Naive thymus-derived CD4-positive, alpha-beta T cell (primary cell): ENCODE measurements at regions of chr1 and their contacts with region 1.

Region 1: GRCh38 chr1:32013386-32014198 is at the start of gene KHDRBS1:
- DNase-seq: peak; percentile 94 to 99 (median 98)
- ATAC-seq: peak; percentile 93
- H3K4me3 ChIP-seq: peak within 1 kb of the TSS; percentile 98
- H3K4me3 Mint-ChIP-seq: peak within 1 kb of the TSS; percentile 89 to 98 (median 96)
- H3K27ac ChIP-seq: peak within 1 kb of the TSS; percentile 96
- H3K27ac Mint-ChIP-seq: peak within 1 kb of the TSS; percentile 90 to 99 (median 97)
- H3K4me1 ChIP-seq: peaks cover 10 to 14% of the 10 kb centered on the region in 2 donors
- H3K4me1 Mint-ChIP-seq: peaks cover 17 to 45% (median 31%) of the 10 kb centered on the region in 7 donors
- H3K27me3 ChIP-seq: no peaks in the 10 kb centered on the region
- H3K27me3 Mint-ChIP-seq: peaks cover 0 to 2% (median 0%) of the 10 kb centered on the region in 5 donors
- total RNA-seq, gene KHDRBS1: 89.2 to 162 (median 125) TPM

Region 2: DNA sequence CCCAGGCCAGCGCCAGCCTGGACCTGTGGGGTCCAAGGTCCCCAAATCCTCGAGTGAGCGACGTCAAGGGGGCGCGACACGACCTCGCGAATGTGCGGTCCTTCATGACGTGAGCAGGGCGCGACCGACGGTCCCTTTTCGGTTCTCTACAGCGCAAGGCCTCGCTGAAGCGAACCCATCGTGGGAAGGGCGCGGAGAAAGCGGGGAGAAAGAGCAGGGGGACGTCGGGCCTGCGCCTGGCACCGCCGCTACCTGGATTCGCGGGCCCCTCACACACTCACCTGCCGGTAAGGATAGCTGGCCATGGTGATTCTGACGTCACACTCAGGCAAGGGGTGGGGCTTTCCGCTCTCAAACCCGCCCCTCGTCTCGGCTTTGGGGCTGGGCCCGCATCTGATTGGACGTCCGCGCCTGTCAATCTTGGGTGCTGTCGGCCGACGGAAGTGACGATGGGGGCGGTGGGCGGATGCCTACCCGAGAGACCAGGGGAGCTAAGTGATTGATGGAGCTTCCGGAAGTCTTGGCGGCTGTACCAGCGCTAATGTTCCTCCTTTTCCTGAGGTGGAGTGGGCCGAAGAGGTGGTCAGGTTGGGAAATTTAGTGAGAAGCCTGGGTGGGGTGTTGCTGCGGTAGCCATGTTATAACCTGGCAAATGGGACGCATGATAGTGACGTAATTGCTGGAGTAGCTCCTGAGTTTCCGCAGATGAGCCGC is 368.9 kb before region 1 on chr1 and contains the start of gene PEF1:
- CTCF ChIA-PET with region 1: no interaction called
- POLR2A ChIA-PET with region 1: no interaction called
- intact Hi-C with region 1: loop called (anchors 1 to 2 kb)
- DNase-seq: peak; percentile 97 to 100 (median 99)
- ATAC-seq: peak; percentile 94
- H3K4me3 ChIP-seq: peak within 1 kb of the TSS; percentile 91
- H3K4me3 Mint-ChIP-seq: peak within 1 kb of the TSS; percentile 92 to 100 (median 98)
- H3K27ac ChIP-seq: peak within 1 kb of the TSS; percentile 98
- H3K27ac Mint-ChIP-seq: peak within 1 kb of the TSS; percentile 98 to 100 (median 99)
- H3K4me1 ChIP-seq: peaks cover 27 to 30% of the 10 kb centered on the region in 2 donors
- H3K4me1 Mint-ChIP-seq: peaks cover 18 to 47% (median 40%) of the 10 kb centered on the region in 7 donors
- H3K27me3 ChIP-seq: no peaks in the 10 kb centered on the region
- H3K27me3 Mint-ChIP-seq: no peaks in the 10 kb centered on the region
- total RNA-seq, gene PEF1: 37.7 to 49.8 (median 40.8) TPM

Region 3: GRCh38 chr1:31891280-31891679 is 122.3 kb before region 1 on chr1:
- CTCF ChIA-PET with region 1: no interaction called
- POLR2A ChIA-PET with region 1: no interaction called
- intact Hi-C with region 1: loop called in 1 of 2 experiments (anchors 1 kb)
- DNase-seq: no peak
- ATAC-seq: no peak
- H3K4me3 ChIP-seq: no peak overlapping the region
- H3K4me3 Mint-ChIP-seq: peak overlapping the region in 2 of 10 donors; percentile 0 to 1
- H3K27ac ChIP-seq: no peak overlapping the region
- H3K27ac Mint-ChIP-seq: peak overlapping the region in 4 of 9 donors; percentile 1 to 98 (median 37)
- H3K4me1 ChIP-seq: peaks cover 13 to 21% of the 10 kb centered on the region in 2 donors
- H3K4me1 Mint-ChIP-seq: peaks cover 14 to 30% (median 21%) of the 10 kb centered on the region in 7 donors
- H3K27me3 ChIP-seq: no peaks in the 10 kb centered on the region
- H3K27me3 Mint-ChIP-seq: no peaks in the 10 kb centered on the region

Region 4: DNA sequence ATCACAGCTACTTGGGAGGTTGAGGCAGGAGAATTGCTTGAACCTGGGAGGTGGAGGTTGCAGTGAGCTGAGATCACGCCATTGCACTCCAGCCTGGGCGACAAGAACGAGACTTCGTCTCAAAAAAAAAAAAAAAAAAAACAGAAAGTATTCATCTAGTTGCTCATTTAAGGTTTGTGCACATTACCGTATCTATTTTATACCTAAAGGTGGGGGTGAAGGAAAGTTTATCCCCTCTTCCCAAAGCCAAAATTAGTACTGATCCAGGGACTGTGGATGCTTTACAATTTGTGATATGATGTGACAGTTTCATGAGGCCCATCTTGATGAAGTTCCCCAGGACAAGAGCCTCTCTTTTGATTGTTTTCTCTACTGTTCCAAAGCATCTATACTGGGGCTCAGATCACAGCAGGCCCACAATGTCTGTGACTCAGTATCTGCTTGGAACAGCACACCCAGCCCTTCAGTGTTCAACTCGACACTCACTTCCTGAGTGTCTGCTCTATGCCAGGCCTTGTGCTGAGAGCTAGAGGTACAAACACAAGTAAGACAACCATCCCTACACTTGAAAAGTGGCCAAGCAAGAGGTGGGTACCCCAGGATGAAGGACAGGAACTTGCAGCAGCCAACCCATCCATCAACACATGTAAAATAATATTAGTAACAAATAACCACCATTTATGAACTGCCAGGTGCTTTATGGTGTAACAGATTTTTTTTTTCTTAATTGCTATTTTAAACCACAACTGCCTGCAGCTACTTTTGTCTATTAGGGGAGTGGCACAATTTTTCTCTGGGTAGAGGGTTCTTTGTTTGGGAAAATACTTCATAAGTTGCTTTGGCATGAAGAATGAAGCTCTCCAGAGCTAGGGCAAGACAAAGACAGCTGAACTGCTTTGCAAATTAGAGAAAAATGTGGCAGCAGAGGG is 28.9 kb before region 1 on chr1:
- CTCF ChIA-PET with region 1: no interaction called
- POLR2A ChIA-PET with region 1: interaction called, 6 read pairs
- intact Hi-C with region 1: loop called (anchors 1 to 2 kb)
- DNase-seq: peak in 5 of 9 donors; percentile 14 to 41 (median 22)
- ATAC-seq: peak; percentile 58
- H3K4me3 ChIP-seq: no peak overlapping the region
- H3K4me3 Mint-ChIP-seq: peak overlapping the region; percentile 7 to 80 (median 66)
- H3K27ac ChIP-seq: peak overlapping the region; percentile 66
- H3K27ac Mint-ChIP-seq: peak overlapping the region; percentile 57 to 95 (median 91)
- H3K4me1 ChIP-seq: peaks cover 46 to 59% of the 10 kb centered on the region in 2 donors
- H3K4me1 Mint-ChIP-seq: peaks cover 34 to 73% (median 60%) of the 10 kb centered on the region in 7 donors
- H3K27me3 ChIP-seq: no peaks in the 10 kb centered on the region
- H3K27me3 Mint-ChIP-seq: no peaks in the 10 kb centered on the region

Region 5: DNA sequence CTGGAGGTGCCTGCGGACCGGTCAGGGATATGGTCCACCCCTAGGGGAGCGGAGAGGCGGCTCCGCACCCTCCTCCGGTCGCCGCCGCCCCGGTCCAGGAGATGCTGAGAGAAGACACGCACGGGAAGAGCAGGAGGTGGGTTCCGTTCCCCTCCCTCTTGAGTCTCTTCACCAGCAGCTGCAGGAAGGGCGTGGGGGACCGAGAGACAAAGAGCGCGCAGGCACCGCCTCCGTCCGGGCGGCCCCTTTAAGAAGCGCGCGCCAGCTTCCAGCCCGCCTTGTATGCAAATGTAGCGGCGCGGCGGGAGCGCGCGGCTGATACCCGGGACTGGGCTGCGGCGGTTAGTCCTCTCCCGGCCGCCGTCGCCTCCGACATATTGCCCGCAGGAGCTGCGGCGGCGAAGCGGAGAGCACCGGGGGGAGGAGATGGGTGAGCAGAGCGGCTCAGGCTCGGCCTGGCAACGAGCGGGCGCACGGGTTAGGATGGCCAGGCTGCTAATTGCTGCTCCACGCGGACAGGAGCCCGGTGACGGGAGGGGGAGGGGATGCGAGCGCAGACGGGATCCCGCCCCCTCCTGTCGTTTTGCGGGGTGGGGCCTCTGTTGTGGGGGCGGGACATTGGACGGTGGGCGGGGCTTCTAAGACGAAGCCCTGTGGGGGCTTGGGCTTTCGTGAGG is 59.2 kb after region 1 on chr1 and contains the start of gene TMEM39B:
- CTCF ChIA-PET with region 1: no interaction called
- POLR2A ChIA-PET with region 1: interaction called, 15 read pairs
- intact Hi-C with region 1: loop called (anchors 1 kb)
- DNase-seq: peak; percentile 90 to 97 (median 96)
- ATAC-seq: peak; percentile 92
- H3K4me3 ChIP-seq: peak within 1 kb of the TSS; percentile 98
- H3K4me3 Mint-ChIP-seq: peak within 1 kb of the TSS; percentile 83 to 94 (median 91)
- H3K27ac ChIP-seq: peak within 1 kb of the TSS; percentile 82
- H3K27ac Mint-ChIP-seq: peak within 1 kb of the TSS; percentile 84 to 95 (median 92)
- H3K4me1 ChIP-seq: peaks cover 5 to 16% of the 10 kb centered on the region in 2 donors
- H3K4me1 Mint-ChIP-seq: peaks cover 21 to 58% (median 47%) of the 10 kb centered on the region in 7 donors
- H3K27me3 ChIP-seq: no peaks in the 10 kb centered on the region
- H3K27me3 Mint-ChIP-seq: no peaks in the 10 kb centered on the region
- total RNA-seq, gene TMEM39B: 11.4 to 35.9 (median 26.4) TPM

Region 6: DNA sequence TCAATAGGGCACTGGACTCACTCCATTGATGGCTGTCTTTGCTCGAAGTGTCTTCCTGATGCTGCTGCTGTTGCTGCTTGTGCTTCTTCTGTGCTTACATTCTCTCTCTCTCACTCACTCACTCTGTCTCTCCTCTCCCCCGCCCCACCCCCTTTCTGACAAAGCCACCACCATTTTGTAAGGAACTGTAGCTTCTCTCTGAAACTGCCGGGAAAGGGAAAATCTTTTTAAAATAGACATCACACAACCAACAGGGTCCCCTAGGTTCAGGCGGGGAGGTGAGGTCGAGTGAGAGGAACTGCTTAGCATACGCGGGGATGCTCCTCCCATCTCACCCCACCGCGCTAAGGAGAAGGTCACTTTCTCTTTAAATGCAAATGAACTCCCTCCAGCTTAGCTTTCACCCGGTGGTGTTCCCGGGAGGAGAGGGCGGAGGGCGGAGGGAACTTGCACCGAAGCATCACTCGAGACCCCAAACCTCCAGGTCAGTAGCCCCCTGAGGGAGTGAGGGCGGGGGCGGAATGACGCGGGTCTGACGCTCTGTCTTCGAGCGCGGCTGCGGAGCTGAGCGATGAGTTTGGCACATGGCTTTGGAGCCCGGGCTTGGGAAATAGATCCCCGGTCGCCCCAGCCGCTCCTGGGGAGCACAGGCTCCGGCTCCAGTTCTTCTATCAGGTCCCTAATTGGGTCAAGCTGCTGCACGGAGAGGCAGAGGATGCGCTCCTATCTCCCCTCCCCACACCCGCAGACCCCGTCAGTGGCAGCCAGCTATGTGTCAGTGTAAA is 186.8 kb after region 1 on chr1 and contains the start of gene CCDC28B:
- CTCF ChIA-PET with region 1: no interaction called
- POLR2A ChIA-PET with region 1: interaction called, 3 read pairs
- intact Hi-C with region 1: loop called (anchors 1 to 10 kb)
- DNase-seq: peak; percentile 35 to 71 (median 62)
- ATAC-seq: peak; percentile 59
- H3K4me3 ChIP-seq: peak within 1 kb of the TSS; percentile 96
- H3K4me3 Mint-ChIP-seq: peak within 1 kb of the TSS; percentile 78 to 99 (median 94)
- H3K27ac ChIP-seq: peak within 1 kb of the TSS; percentile 99
- H3K27ac Mint-ChIP-seq: peak within 1 kb of the TSS; percentile 72 to 98 (median 91)
- H3K4me1 ChIP-seq: peaks cover 32 to 35% of the 10 kb centered on the region in 2 donors
- H3K4me1 Mint-ChIP-seq: peaks cover 41 to 73% (median 60%) of the 10 kb centered on the region in 7 donors
- H3K27me3 ChIP-seq: no peaks in the 10 kb centered on the region
- H3K27me3 Mint-ChIP-seq: no peaks in the 10 kb centered on the region
- total RNA-seq, gene CCDC28B: 6.2 to 39.0 (median 8.7) TPM